Body of pancreas (tissue), 4 donors: ENCODE measurements at regions of chr2 and their contacts with region 1.

Region 1: GRCh38 chr2:135709992-135710391 is 31.7 kb upstream of the UBXN4 start:
- DNase-seq: peak; percentile 47 to 73 (median 60)
- ATAC-seq: peak; percentile 47
- H3K4me3 ChIP-seq: no peak overlapping the region
- H3K27ac ChIP-seq: no peak overlapping the region
- H3K4me1 ChIP-seq: no peaks in the 10 kb centered on the region
- H3K27me3 ChIP-seq: no peaks in the 10 kb centered on the region
- CTCF ChIP-seq: peak; percentile 77 to 97 (median 88)
- POLR2A ChIP-seq: no peak

Region 2: GRCh38 chr2:135005753-135006152 is 704.2 kb before region 1 on chr2:
- intact Hi-C with region 1: loop called (anchors 5 kb)
- DNase-seq: no peak
- ATAC-seq: no peak
- H3K4me3 ChIP-seq: no peak overlapping the region
- H3K27ac ChIP-seq: no peak overlapping the region
- H3K4me1 ChIP-seq: peaks cover 7% of the 10 kb centered on the region
- H3K27me3 ChIP-seq: peaks cover 0 to 5% of the 10 kb centered on the region in 2 donors
- CTCF ChIP-seq: no peak
- POLR2A ChIP-seq: no peak

Region 3: DNA sequence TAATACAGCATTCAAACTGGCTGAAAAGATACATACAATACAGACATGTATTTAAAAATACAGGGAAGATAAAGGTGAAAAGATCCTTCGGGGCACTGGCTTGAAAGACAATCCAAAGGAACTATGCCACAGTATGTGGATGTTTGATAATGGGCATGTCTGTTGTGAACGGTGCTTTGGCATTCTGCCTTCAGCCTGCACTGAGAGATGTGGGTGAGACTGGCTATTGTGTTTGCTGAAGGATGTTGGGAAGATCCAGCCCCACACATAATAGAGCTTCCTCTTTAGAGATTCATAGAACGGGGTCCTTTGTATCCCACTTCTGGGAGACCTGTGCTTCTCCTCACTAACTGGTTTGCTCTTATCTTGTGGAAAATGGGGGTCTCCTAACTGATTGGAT is 473.1 kb after region 1 on chr2:
- intact Hi-C with region 1: no loop called
- DNase-seq: no peak
- ATAC-seq: no peak
- H3K4me3 ChIP-seq: no peak overlapping the region
- H3K27ac ChIP-seq: no peak overlapping the region
- H3K4me1 ChIP-seq: no peaks in the 10 kb centered on the region
- H3K27me3 ChIP-seq: no peaks in the 10 kb centered on the region
- CTCF ChIP-seq: no peak
- POLR2A ChIP-seq: no peak